ENCODE measurements at regions of chr15 and their contacts with region 1.

Region 1: GRCh38 chr15:43268111-43269105 is 1.7 kb upstream of the TGM5 start:
- DNase-seq: peak; percentile 57
- CTCF ChIP-seq: peak; percentile 59

Region 2: DNA sequence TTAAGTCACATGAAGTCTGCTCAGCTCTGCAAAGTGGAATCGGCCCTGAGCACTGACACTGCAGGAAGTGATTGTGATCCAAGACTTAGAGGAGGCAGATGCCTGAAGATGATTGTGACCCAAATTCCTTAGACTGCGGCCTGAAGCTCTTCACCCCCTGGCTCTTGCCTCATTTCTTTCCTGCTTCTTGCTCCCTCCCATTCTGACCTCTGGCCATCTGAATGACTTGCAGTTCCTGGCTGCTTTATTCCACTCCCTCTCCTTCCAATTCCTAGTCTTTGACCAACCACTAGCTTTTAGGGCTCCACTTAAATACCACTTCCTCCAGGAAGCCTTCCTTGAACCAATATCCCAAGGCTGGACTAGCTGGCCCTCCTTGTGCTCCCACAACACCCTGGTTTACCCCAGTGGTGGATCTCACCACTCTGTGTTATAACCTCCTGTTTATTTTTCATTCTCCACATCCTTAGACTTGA is 37.7 kb before region 1 on chr15:
- CTCF ChIA-PET with region 1: interaction called, 250 read pairs
- POLR2A ChIA-PET with region 1: interaction called, 4 read pairs
- DNase-seq: no peak
- CTCF ChIP-seq: no peak

Region 3: DNA sequence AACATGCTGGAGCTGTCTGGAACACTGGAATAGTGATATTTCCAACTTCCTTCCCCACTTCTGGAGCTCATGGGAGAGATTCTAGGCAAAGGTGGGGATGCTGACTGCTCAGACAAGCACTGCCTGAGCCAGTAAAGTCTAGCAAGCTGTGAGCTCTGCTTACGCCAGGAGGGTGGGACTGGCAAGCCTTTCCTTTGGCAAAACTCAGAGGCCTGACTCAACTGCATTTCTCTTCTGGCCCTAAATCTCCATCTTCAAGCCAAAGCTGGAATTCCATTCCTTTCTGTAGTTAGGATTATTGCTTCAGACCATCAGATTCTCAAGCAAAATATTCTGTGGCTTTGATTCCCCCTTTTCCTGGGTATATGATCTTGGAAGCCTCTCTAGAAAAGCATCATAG is 27.3 kb before region 1 on chr15:
- CTCF ChIA-PET with region 1: interaction called, 46 read pairs
- POLR2A ChIA-PET with region 1: no interaction called
- DNase-seq: no peak
- CTCF ChIP-seq: no peak

Region 4: GRCh38 chr15:43253431-43254403 is 14.7 kb before region 1 on chr15:
- CTCF ChIA-PET with region 1: interaction called, 31 read pairs
- POLR2A ChIA-PET with region 1: no interaction called
- DNase-seq: peak; percentile 64
- CTCF ChIP-seq: no peak